Heart left ventricle (tissue), 16 donors: ENCODE measurements at regions of chr2 and their contacts with region 1.

Region 1: GRCh38 chr2:200306196-200306930 is at the start of gene SPATS2L:
- DNase-seq: peak; percentile 87 to 94 (median 88)
- ATAC-seq: peak; percentile 77 to 90 (median 88)
- H3K4me3 ChIP-seq: peak within 1 kb of the TSS; percentile 64 to 98 (median 91)
- H3K27ac ChIP-seq: peak within 1 kb of the TSS; percentile 87 to 96 (median 92)
- H3K4me1 ChIP-seq: peaks cover 0 to 39% (median 21%) of the 10 kb centered on the region in 12 donors
- H3K27me3 ChIP-seq: no peaks in the 10 kb centered on the region
- CTCF ChIP-seq: no peak
- POLR2A ChIP-seq: peak in 1 of 2 donors; percentile 51
- total RNA-seq, gene SPATS2L: 69.7 to 177 (median 102) TPM

Region 2: DNA sequence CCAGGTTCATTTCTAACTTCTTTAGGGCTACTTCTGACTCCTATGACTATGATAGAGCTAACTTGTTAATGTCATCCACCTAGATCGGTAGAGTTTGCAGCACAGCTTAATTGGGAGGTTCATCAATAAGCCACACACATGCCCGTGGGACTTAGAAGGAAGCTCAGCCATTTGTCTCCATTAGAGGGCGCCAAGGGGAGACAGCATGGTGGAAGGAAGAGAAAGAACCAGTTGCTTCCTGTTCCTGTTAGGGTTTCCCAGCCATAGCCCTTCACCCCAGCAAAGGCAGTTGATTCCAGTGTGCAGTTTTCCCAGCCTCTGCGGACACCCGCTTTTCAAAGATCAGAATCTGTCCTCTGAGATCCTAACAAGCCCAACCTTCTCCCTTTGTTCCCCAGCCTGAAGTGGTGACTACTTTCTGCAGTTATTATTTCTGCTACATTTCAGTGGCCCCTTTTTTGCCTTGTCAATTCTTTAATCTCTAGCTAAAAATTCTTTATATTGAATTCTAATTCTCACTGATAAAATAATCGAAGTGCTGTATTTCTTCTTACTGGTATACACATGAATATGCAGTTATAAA is 320.6 kb before region 1 on chr2:
- intact Hi-C with region 1: loop called (anchors 2 to 10 kb)
- DNase-seq: peak in 4 of 5 donors; percentile 47 to 67 (median 54)
- ATAC-seq: peak; percentile 36 to 76 (median 60)
- H3K4me3 ChIP-seq: no peak overlapping the region
- H3K27ac ChIP-seq: no peak overlapping the region
- H3K4me1 ChIP-seq: peaks cover 0 to 26% (median 10%) of the 10 kb centered on the region in 12 donors
- H3K27me3 ChIP-seq: no peaks in the 10 kb centered on the region
- CTCF ChIP-seq: peak; percentile 44 to 71 (median 52)
- POLR2A ChIP-seq: no peak

Region 3: DNA sequence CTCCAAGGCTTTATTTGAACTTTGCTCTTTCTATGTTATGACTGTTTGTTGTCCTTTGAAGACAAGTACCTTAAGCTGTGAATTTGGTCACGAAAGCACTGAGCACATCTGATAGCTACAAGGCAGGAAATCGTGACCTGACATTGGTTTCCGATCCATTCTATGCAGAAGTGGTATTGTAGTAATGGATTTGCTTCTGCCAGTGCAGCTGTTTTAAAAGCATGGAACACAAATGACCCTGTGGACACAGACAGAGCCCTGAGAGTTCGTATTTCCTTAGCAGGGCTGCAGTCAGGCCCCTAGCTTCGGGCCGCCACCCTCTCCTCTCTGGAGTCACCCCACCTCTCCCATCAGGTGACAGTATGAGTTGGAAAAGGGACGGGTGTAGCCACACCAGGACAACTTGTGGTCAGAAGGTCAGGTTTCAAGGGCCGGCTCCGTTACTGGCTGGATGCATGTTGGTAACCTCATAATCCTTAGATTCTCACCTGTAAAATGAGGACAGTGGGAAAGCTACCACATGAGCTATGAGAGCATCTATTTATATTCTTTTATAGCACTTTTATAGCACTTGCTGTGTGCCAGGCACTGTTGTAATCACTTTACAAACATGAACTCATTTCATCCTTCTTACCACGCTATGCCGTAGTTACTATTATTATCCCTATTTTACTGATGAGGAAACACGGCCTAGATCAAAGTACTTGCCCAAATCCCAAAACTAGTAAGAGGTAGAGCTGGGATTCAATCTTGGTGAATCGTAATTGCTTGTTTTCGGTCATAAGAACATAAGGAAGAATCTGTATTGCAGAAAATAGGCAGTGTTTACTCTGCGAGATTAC is 70.4 kb after region 1 on chr2:
- intact Hi-C with region 1: loop called in 2 of 10 experiments (anchors 5 kb)
- DNase-seq: no peak
- ATAC-seq: peak in 3 of 4 donors; percentile 77 to 87 (median 86)
- H3K4me3 ChIP-seq: no peak overlapping the region
- H3K27ac ChIP-seq: peak overlapping the region in 10 of 12 donors; percentile 24 to 70 (median 54)
- H3K4me1 ChIP-seq: peaks cover 0 to 87% (median 53%) of the 10 kb centered on the region in 12 donors
- H3K27me3 ChIP-seq: no peaks in the 10 kb centered on the region
- CTCF ChIP-seq: no peak
- POLR2A ChIP-seq: no peak

Region 4: DNA sequence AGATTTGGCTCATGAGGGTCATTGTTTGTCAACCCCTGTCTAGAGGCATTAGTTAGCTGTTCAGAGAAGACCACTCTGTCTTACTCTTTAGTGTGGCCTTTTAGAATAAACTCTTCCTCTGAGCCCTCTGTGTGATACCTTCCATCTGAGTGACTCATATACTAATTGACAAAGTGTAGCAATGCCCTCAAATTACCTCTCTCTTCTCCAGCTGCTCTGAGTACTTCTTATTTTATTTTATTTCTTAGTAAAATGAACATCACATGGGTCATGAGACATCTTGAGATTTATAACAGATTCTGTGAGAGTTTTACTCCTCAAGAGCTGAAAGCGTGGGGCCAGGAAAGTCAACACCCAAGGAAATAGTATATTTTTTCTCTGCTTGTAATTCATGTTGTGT is 136.1 kb after region 1 on chr2:
- intact Hi-C with region 1: loop called in 1 of 10 experiments (anchors 10 kb)
- DNase-seq: no peak
- ATAC-seq: peak in 1 of 4 donors; percentile 76
- H3K4me3 ChIP-seq: no peak overlapping the region
- H3K27ac ChIP-seq: no peak overlapping the region
- H3K4me1 ChIP-seq: peaks cover 0 to 32% (median 3%) of the 10 kb centered on the region in 12 donors
- H3K27me3 ChIP-seq: no peaks in the 10 kb centered on the region
- CTCF ChIP-seq: no peak
- POLR2A ChIP-seq: no peak

Region 5: DNA sequence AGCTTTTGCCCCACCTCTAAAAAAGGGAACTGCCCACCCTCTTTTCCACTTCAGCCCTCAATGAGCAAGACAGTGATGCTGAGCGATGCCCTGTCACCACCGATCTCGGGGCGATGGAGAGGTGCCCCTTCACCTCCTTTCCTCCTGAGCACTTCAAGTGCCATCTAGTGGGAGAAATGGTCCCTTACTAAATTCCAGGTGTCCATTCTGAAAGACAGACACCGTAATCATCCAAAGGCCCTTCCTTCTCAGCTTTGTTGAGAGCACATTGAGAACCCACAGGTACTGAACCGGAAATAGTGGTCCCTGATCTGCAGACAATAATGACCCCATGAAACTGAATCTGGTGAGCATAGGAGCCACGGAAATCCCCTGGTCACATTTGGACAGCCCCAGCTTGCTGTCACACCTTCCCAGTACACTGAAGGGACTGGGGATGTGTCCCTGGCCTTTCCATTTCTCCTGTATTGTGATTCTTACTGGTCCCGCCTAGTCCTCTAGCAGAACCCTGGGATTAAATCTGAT is 165.0 kb after region 1 on chr2:
- intact Hi-C with region 1: loop called in 6 of 10 experiments (anchors 5 to 10 kb)
- DNase-seq: no peak
- ATAC-seq: no peak
- H3K4me3 ChIP-seq: no peak overlapping the region
- H3K27ac ChIP-seq: no peak overlapping the region
- H3K4me1 ChIP-seq: peaks cover 0 to 14% (median 1%) of the 10 kb centered on the region in 12 donors
- H3K27me3 ChIP-seq: no peaks in the 10 kb centered on the region
- CTCF ChIP-seq: peak in 11 of 12 donors; percentile 22 to 61 (median 47)
- POLR2A ChIP-seq: no peak